Spleen (tissue), 13 donors: ENCODE measurements at regions of chr5 and their contacts with region 1.

Region 1: DNA sequence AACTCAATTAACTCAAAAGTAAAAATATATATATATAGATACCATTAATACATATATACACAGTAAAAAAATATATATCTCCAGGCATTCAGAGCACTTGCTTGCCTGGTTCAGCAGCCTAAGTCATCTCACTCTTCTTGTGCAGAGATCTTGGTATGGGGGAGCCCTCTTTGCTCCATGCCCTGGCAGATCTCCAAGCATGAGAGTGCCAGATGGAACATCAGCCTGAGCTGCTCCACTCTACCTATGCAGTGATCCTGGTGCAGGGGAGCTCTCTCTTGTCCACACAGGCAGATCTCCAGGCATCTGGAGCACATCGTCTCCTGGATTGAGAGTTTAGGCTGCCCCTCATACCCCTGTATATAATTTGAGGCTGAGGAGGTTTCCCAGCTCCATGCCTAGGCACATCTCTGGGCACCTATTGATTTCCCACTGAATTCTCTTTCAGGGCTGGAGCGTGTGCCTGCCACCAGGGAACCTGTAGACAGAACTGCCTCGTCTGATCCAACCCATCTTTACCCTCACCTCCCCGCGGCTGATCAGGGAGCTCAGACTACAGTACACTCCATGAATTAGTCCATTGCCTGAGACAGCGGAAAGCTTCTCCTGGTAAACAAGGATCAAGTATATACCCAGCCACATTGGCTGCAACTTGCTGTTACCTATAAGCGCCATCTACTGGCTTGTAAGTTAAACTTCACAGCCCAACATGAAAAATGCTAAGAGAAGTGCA is 342.4 kb upstream of the GRIA1 start:
- DNase-seq: no peak
- H3K4me3 ChIP-seq: no peak overlapping the region
- H3K27ac ChIP-seq: no peak overlapping the region
- H3K4me1 ChIP-seq: no peaks in the 10 kb centered on the region
- H3K27me3 ChIP-seq: peaks cover 0 to 3% (median 0%) of the 10 kb centered on the region in 7 donors
- CTCF ChIP-seq: peak in 7 of 11 experiments; percentile 20 to 45 (median 34)
- POLR2A ChIP-seq: no peak

Region 2: GRCh38 chr5:152560512-152561137 is 587.4 kb before region 1 on chr5:
- intact Hi-C with region 1: loop called (anchors 10 kb)
- DNase-seq: peak; percentile 76
- H3K4me3 ChIP-seq: no peak overlapping the region
- H3K27ac ChIP-seq: no peak overlapping the region
- H3K4me1 ChIP-seq: no peaks in the 10 kb centered on the region
- H3K27me3 ChIP-seq: no peaks in the 10 kb centered on the region
- CTCF ChIP-seq: peak in 10 of 11 experiments; percentile 41 to 77 (median 68)
- POLR2A ChIP-seq: no peak

Region 3: GRCh38 chr5:152855441-152855840 is 292.6 kb before region 1 on chr5:
- intact Hi-C with region 1: no loop called
- DNase-seq: no peak
- H3K4me3 ChIP-seq: no peak overlapping the region
- H3K27ac ChIP-seq: no peak overlapping the region
- H3K4me1 ChIP-seq: no peaks in the 10 kb centered on the region
- H3K27me3 ChIP-seq: no peaks in the 10 kb centered on the region
- CTCF ChIP-seq: no peak
- POLR2A ChIP-seq: no peak

Region 4: GRCh38 chr5:153233933-153234332 is 85.9 kb after region 1 on chr5:
- intact Hi-C with region 1: no loop called
- DNase-seq: no peak
- H3K4me3 ChIP-seq: no peak overlapping the region
- H3K27ac ChIP-seq: no peak overlapping the region
- H3K4me1 ChIP-seq: no peaks in the 10 kb centered on the region
- H3K27me3 ChIP-seq: no peaks in the 10 kb centered on the region
- CTCF ChIP-seq: no peak
- POLR2A ChIP-seq: no peak